GM13977 (cell line): ENCODE measurements at regions of chr19 and their contacts with region 1.

Region 1: GRCh38 chr19:33406521-33407139 is 33.1 kb downstream of the CEBPG start:
- DNase-seq: peak; percentile 92
- CTCF ChIP-seq: peak; percentile 97

Region 2: DNA sequence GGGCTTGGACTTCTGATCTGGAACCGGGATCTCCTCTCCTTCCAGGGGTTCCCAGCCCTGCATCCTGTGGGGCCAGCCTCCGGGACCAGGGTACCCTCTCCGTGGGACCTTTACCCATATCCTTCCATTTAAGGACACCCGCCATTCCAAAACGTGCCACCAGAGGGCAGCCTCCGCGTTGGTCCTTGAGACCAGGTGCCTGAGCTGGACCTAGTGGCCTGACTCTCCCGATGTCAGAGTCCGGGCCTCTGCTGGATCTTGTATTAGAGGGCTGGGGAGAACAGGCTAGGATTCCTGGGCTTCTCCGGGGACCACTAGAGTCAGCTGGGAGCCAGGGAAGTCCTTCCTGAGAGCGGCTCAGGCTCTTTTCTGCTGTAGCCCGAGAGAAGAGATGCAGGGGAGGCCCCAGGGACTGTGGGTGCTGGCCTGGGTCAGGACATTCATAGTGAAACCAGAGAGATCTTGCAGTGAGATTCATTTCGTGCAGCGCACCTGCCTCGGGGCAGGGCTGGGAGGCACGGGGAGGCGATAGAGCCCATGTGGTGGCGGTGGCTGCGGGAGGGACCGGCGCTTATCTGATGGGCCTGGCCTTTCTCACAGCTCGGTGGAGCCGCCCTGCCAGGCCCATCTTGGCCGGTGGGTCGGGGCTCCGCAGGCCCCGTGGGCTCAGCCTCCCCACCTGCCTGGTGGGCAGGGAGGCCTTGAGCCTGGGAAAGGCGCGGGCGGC is 171.2 kb before region 1 on chr19:
- in situ Hi-C with region 1: loop called (anchors 10 kb)
- DNase-seq: peak; percentile 94
- CTCF ChIP-seq: peak; percentile 92